PC-3 (cell line): ENCODE measurements at regions of chr18 and their contacts with region 1.

Region 1: GRCh38 chr18:30588673-30589164 is 453.8 kb downstream of the DSC3 start:
- DNase-seq: peak; percentile 70
- ATAC-seq: peak; percentile 91
- H3K4me3 ChIP-seq: no peak overlapping the region
- H3K27ac ChIP-seq: peak overlapping the region; percentile 77
- H3K4me1 ChIP-seq: peaks cover 19% of the 10 kb centered on the region
- H3K27me3 ChIP-seq: no peaks in the 10 kb centered on the region
- CTCF ChIP-seq: no peak

Region 2: DNA sequence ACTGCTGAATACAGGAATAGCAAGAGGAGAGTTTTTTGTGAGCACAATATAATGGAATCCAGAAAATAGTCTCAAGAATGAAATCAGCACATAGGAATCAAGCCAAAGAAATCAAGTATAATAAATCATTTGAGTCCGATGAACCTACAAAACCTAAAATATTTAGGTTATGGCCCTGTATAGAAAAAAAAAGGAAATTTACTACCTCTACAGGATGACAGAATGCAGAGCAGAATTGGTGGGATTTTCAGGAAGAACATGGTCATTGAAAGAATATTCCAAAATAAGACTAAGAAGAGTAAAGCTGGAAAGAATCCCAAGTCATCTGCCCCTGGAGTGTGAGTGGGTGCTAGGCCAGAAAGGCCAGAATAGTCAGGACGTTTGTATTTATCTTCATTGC is 1370.6 kb before region 1 on chr18:
- CTCF ChIA-PET with region 1: no interaction called
- POLR2A ChIA-PET with region 1: no interaction called
- intact Hi-C with region 1: no loop called
- DNase-seq: no peak
- ATAC-seq: no peak
- H3K4me3 ChIP-seq: no peak overlapping the region
- H3K27ac ChIP-seq: no peak overlapping the region
- H3K4me1 ChIP-seq: no peaks in the 10 kb centered on the region
- H3K27me3 ChIP-seq: no peaks in the 10 kb centered on the region
- CTCF ChIP-seq: no peak

Region 3: DNA sequence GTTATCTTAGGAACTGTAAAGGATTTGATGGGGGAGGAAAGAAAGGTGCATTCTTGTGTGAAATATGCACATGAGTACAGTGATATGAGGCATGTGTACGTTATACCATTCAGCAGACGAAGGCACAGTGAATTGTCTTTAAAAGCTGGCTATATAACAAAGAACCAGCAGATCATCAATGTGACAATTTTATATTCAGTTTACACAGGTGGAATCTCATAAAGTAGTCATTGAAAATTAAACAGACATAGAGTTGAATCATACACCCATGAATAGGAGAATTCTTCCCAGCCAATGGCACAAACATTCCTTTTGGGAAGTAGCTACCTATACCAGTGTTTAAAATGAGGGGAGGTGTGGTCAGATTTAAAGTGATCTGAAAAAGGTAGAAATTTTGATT is 16.5 kb before region 1 on chr18:
- CTCF ChIA-PET with region 1: no interaction called
- POLR2A ChIA-PET with region 1: no interaction called
- intact Hi-C with region 1: loop called (anchors 2 kb)
- DNase-seq: peak; percentile 81
- ATAC-seq: peak; percentile 99
- H3K4me3 ChIP-seq: no peak overlapping the region
- H3K27ac ChIP-seq: peak overlapping the region; percentile 79
- H3K4me1 ChIP-seq: peaks cover 16% of the 10 kb centered on the region
- H3K27me3 ChIP-seq: no peaks in the 10 kb centered on the region
- CTCF ChIP-seq: no peak

Region 4: GRCh38 chr18:30623401-30624065 is 34.8 kb after region 1 on chr18:
- CTCF ChIA-PET with region 1: no interaction called
- POLR2A ChIA-PET with region 1: no interaction called
- intact Hi-C with region 1: loop called (anchors 5 kb)
- DNase-seq: peak; percentile 70
- ATAC-seq: peak; percentile 94
- H3K4me3 ChIP-seq: 0 out of 2 replicates have a peak overlapping the region, but pooled peaks have one; percentile 15
- H3K27ac ChIP-seq: peak overlapping the region; percentile 19
- H3K4me1 ChIP-seq: peaks cover 17% of the 10 kb centered on the region
- H3K27me3 ChIP-seq: no peaks in the 10 kb centered on the region
- CTCF ChIP-seq: no peak

Region 5: GRCh38 chr18:30730915-30731314 is 142.2 kb after region 1 on chr18:
- CTCF ChIA-PET with region 1: no interaction called
- POLR2A ChIA-PET with region 1: no interaction called
- intact Hi-C with region 1: no loop called
- DNase-seq: no peak
- ATAC-seq: no peak
- H3K4me3 ChIP-seq: no peak overlapping the region
- H3K27ac ChIP-seq: no peak overlapping the region
- H3K4me1 ChIP-seq: no peaks in the 10 kb centered on the region
- H3K27me3 ChIP-seq: no peaks in the 10 kb centered on the region
- CTCF ChIP-seq: no peak